ENCODE measurements at regions of chr2 and their contacts with region 1.

Region 1: DNA sequence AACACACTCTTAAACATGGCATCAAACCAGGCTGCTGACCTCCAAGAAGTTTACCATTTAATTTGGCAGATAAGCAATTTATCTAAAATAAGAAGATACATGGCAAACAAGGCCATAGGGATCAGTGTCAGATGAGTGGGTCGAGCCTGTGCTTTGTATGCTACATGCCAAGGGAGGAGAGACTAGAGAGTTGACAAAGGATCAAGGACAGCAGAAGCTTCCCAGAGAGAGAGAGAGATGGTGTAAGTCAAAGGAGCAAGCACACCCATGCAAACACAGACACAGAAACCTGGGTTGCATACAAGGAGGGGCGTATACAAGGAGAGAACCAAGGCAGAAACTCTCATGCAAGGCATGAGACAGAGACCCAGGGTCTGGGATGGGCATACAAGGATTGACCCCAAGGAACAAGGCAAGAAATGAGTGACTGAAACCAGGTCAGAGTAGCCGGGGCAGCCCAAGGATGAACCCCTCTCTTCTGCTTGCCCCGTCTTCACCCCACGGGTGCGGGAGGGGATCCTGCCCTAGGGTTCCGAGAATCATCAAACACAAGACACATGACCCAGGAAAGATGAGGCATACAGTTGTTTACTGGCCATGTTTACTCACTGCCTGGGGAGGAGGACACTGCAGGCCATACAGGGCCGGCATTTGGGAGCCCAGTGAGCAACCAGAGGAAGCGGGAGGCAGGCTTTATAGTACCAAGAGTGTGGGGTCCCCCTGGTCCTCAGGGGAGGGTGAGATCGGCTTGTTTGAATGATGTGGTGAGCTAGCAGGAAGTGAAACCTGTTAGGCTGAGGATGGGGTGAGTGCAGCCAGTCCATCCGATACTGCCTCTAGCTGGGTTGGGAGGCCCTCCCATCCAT is 529.2 kb upstream of the ID2 start:
- DNase-seq: no peak
- H3K4me3 Mint-ChIP-seq: no peak overlapping the region
- H3K27ac Mint-ChIP-seq: no peak overlapping the region
- H3K4me1 Mint-ChIP-seq: peaks cover 28% of the 10 kb centered on the region
- H3K27me3 Mint-ChIP-seq: no peaks in the 10 kb centered on the region

Region 2: GRCh38 chr2:7773362-7774360 is 379.0 kb before region 1 on chr2:
- CTCF ChIA-PET with region 1: no interaction called
- POLR2A ChIA-PET with region 1: no interaction called
- intact Hi-C with region 1: loop called (anchors 5 kb)
- DNase-seq: peak; percentile 65
- H3K4me3 Mint-ChIP-seq: no peak overlapping the region
- H3K27ac Mint-ChIP-seq: peak overlapping the region; percentile 66
- H3K4me1 Mint-ChIP-seq: peaks cover 33% of the 10 kb centered on the region
- H3K27me3 Mint-ChIP-seq: peaks cover 12% of the 10 kb centered on the region

Region 3: GRCh38 chr2:8119782-8120505 is 32.7 kb before region 1 on chr2:
- CTCF ChIA-PET with region 1: no interaction called
- POLR2A ChIA-PET with region 1: no interaction called
- intact Hi-C with region 1: loop called (anchors 2 kb)
- DNase-seq: no peak
- H3K4me3 Mint-ChIP-seq: peak overlapping the region; percentile 21
- H3K27ac Mint-ChIP-seq: peak overlapping the region; percentile 69
- H3K4me1 Mint-ChIP-seq: peaks cover 17% of the 10 kb centered on the region
- H3K27me3 Mint-ChIP-seq: peaks cover 2% of the 10 kb centered on the region

Region 4: GRCh38 chr2:8229546-8229986 is 76.9 kb after region 1 on chr2:
- CTCF ChIA-PET with region 1: no interaction called
- POLR2A ChIA-PET with region 1: no interaction called
- intact Hi-C with region 1: no loop called
- DNase-seq: peak; percentile 69
- H3K4me3 Mint-ChIP-seq: no peak overlapping the region
- H3K27ac Mint-ChIP-seq: peak overlapping the region; percentile 46
- H3K4me1 Mint-ChIP-seq: peaks cover 9% of the 10 kb centered on the region
- H3K27me3 Mint-ChIP-seq: no peaks in the 10 kb centered on the region

Region 5: GRCh38 chr2:8378016-8378810 is 225.6 kb after region 1 on chr2:
- CTCF ChIA-PET with region 1: no interaction called
- POLR2A ChIA-PET with region 1: no interaction called
- intact Hi-C with region 1: loop called (anchors 1 kb)
- DNase-seq: peak; percentile 49
- H3K4me3 Mint-ChIP-seq: no peak overlapping the region
- H3K27ac Mint-ChIP-seq: peak overlapping the region; percentile 56
- H3K4me1 Mint-ChIP-seq: peaks cover 38% of the 10 kb centered on the region
- H3K27me3 Mint-ChIP-seq: no peaks in the 10 kb centered on the region

Region 6: GRCh38 chr2:8488001-8488738 is 335.5 kb after region 1 on chr2:
- CTCF ChIA-PET with region 1: no interaction called
- POLR2A ChIA-PET with region 1: interaction called, 6 read pairs
- intact Hi-C with region 1: loop called (anchors 10 kb)
- DNase-seq: peak; percentile 88
- H3K4me3 Mint-ChIP-seq: peak overlapping the region; percentile 77
- H3K27ac Mint-ChIP-seq: peak overlapping the region; percentile 91
- H3K4me1 Mint-ChIP-seq: peaks cover 72% of the 10 kb centered on the region
- H3K27me3 Mint-ChIP-seq: no peaks in the 10 kb centered on the region